ENCODE measurements at regions of chr18 and their contacts with region 1.

Region 1: GRCh38 chr18:76476665-76477561 is 18.1 kb downstream of the ZNF516 start:
- DNase-seq: peak; percentile 52 to 98
- H3K4me3 ChIP-seq: peak overlapping the region; percentile 46
- H3K27ac ChIP-seq: peak overlapping the region; percentile 94
- H3K4me1 ChIP-seq: peaks cover 51% of the 10 kb centered on the region
- H3K27me3 ChIP-seq: no peaks in the 10 kb centered on the region
- CTCF ChIP-seq: no peak

Region 2: GRCh38 chr18:75799449-75800330 is 677.2 kb before region 1 on chr18:
- CTCF ChIA-PET with region 1: no interaction called
- POLR2A ChIA-PET with region 1: no interaction called
- intact Hi-C with region 1: no loop called
- DNase-seq: no peak
- H3K4me3 ChIP-seq: no peak overlapping the region
- H3K27ac ChIP-seq: no peak overlapping the region
- H3K4me1 ChIP-seq: no peaks in the 10 kb centered on the region
- H3K27me3 ChIP-seq: peaks cover 20% of the 10 kb centered on the region
- CTCF ChIP-seq: no peak

Region 3: DNA sequence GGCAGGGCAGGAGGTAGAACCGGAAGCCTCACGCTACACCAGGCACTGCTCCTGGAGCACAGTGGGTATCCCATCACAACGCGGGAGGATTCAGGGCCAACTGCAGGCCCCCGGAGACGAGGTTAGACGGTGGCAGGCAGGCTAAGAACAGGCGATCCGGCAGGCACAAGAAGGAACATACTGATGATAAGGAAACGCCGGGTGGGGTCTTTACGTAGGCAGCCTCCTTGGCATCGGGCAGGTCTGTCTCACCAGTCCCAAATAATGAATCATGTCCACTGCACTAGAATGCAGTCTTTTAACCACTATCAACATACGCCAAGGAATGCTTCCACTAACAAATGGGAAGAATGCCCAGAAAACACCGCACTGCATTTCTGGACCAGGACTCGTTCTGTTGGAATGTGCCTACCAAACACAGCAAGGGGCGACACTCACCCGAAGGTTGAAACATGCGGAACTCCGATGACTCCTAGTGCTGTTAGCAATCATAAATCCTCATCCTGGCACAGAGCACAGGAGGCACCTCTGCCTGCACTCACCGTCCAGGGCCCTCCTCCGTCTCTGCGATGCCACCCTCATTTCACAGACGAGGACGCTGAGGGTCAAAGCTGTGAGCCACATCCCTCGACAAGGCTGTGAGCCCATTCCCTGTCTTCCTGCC is 17.1 kb before region 1 on chr18:
- CTCF ChIA-PET with region 1: no interaction called
- POLR2A ChIA-PET with region 1: no interaction called
- intact Hi-C with region 1: loop called (anchors 1 kb)
- DNase-seq: peak; percentile 78
- H3K4me3 ChIP-seq: no peak overlapping the region
- H3K27ac ChIP-seq: 0 out of 2 replicates have a peak overlapping the region, but pooled peaks have one; percentile 18
- H3K4me1 ChIP-seq: no peaks in the 10 kb centered on the region; the same call in 1 of the 2 replicates
- H3K27me3 ChIP-seq: no peaks in the 10 kb centered on the region
- CTCF ChIP-seq: no peak

Region 4: DNA sequence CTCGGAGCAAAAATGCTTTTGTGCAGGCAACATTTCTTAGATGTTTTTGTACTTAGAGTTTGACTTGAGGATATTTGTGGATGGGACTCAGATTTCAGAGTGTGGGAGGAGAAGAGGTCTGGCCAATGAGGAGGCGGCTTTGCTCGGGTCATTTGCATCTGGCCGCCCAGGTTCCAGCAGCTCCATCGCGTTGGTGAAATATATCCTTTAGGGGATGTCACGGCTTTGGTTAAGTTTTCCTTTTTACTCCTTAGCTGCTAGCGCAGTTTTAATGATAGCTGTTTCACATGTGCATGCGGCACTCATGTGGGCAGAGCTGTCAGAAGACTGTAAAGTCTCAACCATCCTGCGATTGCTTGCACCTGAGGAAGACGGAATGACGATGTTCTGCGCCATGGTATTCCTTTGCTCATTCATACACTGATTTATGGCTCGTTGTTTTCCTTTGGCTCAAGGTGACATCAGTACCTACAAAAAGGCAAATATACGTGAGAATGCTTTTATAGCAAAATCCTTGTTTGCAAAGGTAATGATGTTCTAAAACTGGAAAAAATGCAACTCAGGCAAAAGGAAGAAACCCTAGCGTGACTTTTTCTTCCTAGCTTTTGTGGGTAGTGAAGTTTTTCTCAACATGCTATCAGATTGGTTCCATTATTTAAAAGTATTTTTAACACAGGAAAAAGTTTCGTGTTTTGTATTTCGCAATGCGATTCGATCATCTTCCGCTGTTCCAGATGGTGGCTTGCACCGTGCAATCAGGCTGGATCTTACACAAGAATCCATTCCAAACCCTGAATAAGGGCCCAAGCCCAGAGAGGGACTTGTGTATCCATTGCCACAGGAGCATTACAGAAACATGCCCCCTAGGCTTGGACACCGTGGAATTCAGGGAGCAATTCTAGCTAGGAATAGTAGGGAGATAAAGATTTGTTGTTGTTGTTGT is 88.6 kb after region 1 on chr18:
- CTCF ChIA-PET with region 1: no interaction called
- POLR2A ChIA-PET with region 1: no interaction called
- intact Hi-C with region 1: loop called (anchors 5 kb)
- DNase-seq: peak; percentile 75 to 92
- H3K4me3 ChIP-seq: peak overlapping the region; percentile 63
- H3K27ac ChIP-seq: peak overlapping the region; percentile 99
- H3K4me1 ChIP-seq: peaks cover 36% of the 10 kb centered on the region
- H3K27me3 ChIP-seq: no peaks in the 10 kb centered on the region
- CTCF ChIP-seq: no peak

Measured in PC-9 (cell line).